Heart right ventricle (tissue), 16 donors: ENCODE measurements at regions of chr15 and their contacts with region 1.

Region 1: DNA sequence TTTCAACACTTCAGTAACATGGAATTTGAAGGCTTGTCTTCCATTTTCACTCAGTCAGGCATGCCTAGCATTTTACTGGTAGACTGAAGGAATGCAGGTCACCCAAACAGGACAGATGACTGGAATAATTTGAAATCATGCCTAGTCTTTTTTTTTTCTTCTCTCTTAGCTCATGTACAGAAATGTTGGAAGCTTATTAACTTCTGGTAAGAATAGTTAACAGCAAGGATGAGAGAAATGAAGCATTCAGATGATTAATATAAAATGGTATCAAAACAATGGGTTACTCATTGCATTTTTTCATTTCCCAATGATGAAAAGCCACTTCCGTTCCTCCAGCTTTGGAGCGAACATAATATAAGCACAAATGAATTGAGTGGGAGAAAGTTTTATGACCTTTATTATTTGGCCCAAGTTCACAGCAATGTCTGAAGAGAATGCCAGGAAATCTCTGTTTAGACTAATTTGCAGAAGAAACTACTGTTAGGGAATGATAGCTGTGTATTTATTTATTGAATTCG is 431.6 kb upstream of the RASGRP1 start:
- DNase-seq: no peak
- ATAC-seq: peak in 2 of 8 donors; percentile 36 to 38
- H3K4me3 ChIP-seq: no peak overlapping the region
- H3K27ac ChIP-seq: peak overlapping the region in 5 of 10 donors; percentile 1 to 77 (median 23)
- H3K4me1 ChIP-seq: peaks cover 0 to 41% (median 20%) of the 10 kb centered on the region in 9 donors
- H3K27me3 ChIP-seq: no peaks in the 10 kb centered on the region
- CTCF ChIP-seq: no peak

Region 2: GRCh38 chr15:38945551-38946298 is 50.4 kb before region 1 on chr15:
- intact Hi-C with region 1: loop called in 1 of 10 experiments (anchors 5 kb)
- DNase-seq: no peak
- ATAC-seq: no peak
- H3K4me3 ChIP-seq: no peak overlapping the region
- H3K27ac ChIP-seq: no peak overlapping the region
- H3K4me1 ChIP-seq: no peaks in the 10 kb centered on the region
- H3K27me3 ChIP-seq: peaks cover 0 to 5% (median 0%) of the 10 kb centered on the region in 7 donors
- CTCF ChIP-seq: no peak